ENCODE measurements at regions of chr19 and their contacts with region 1.

Region 1: DNA sequence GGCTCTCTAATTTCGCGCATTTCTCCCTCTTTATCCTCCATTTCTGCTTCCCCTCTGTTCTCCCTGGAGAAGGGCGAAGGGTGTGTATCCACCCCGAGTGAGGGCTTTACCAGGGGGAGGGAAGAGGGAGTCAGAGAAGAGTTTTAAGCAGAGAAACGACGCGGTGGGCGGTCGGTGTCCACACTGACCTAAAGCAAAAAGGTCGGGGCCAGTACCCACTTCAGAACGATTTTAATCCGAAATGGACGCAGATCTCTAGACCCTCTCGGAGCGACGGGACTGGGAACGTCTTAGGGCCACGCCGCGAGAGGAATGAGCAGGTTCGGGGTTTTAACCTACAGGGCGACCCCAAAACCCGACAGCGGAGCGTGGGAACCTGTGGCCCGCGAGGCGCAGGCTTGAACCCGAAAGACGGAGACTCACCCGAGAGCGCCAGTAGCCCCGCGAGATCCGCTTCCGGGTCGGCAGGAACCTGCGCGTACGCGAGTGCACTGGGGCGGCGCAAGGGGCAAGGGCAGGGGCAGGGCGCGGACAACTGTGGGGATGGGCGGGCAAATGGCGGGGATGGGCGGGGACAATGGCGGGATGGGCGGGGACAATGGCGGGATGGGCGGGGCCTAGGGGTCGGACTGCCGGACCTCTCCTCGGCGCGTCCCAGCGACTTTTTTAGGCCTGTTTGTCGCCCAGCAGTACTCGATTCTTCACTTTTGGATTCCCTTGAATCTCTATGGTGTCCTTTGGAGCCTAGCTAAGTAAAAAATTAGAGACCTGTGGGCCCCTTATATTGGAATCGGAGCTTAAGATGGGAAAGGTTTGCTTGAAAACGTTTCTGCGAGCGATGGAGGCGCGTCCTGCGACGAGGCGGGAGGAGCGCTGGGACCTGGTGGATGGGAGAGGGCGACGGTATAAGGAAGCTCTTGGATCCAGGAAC is at the start of gene ZNF677:
- DNase-seq: peak; percentile 90
- H3K4me3 Mint-ChIP-seq: peak within 1 kb of the TSS; percentile 78
- H3K27ac Mint-ChIP-seq: no peak within 1 kb of the TSS
- H3K4me1 Mint-ChIP-seq: peaks cover 10% of the 10 kb centered on the region
- H3K27me3 Mint-ChIP-seq: no peaks in the 10 kb centered on the region
- total RNA-seq, gene ZNF677: 4.6 to 4.9 TPM

Region 2: GRCh38 chr19:53068834-53069233 is 185.8 kb before region 1 on chr19:
- CTCF ChIA-PET with region 1: no interaction called
- POLR2A ChIA-PET with region 1: no interaction called
- intact Hi-C with region 1: loop called (anchors 10 kb)
- DNase-seq: no peak
- H3K4me3 Mint-ChIP-seq: no peak overlapping the region
- H3K27ac Mint-ChIP-seq: no peak overlapping the region
- H3K4me1 Mint-ChIP-seq: no peaks in the 10 kb centered on the region
- H3K27me3 Mint-ChIP-seq: no peaks in the 10 kb centered on the region

Region 3: DNA sequence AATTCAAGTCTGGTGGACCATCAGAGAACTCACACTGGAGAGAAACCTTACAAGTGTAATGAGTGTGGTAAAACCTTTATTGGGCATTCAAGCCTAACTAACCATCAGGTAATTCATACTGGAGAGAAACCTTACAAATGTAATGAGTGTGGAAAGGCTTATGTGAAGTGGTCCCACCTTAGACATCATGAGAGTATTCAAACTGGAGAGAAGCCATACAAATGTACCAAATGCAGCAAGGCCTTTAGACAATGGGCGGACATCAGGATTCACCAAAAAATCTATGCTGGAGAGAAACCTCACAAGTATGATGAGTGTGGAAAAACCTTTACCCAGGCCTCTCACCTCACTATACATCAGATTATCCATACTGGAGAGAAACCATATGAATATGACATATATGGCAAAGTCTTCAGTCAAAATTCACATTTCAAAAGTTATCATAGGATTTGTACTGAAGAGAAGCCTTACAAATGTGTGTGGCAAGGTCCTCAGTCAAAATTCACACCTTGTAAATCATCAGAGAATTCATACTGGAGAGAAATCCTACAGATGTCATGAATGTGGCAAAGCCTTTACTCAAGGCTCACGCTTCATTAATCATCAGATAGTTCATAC is 41.9 kb before region 1 on chr19:
- CTCF ChIA-PET with region 1: no interaction called
- POLR2A ChIA-PET with region 1: no interaction called
- intact Hi-C with region 1: no loop called
- DNase-seq: no peak
- H3K4me3 Mint-ChIP-seq: no peak overlapping the region
- H3K27ac Mint-ChIP-seq: no peak overlapping the region
- H3K4me1 Mint-ChIP-seq: no peaks in the 10 kb centered on the region
- H3K27me3 Mint-ChIP-seq: no peaks in the 10 kb centered on the region

Region 4: GRCh38 chr19:53394974-53395839 is 140.5 kb after region 1 on chr19 and contains the start of gene ZNF765:
- CTCF ChIA-PET with region 1: no interaction called
- POLR2A ChIA-PET with region 1: no interaction called
- intact Hi-C with region 1: loop called (anchors 10 kb)
- DNase-seq: peak; percentile 98
- H3K4me3 Mint-ChIP-seq: peak within 1 kb of the TSS; percentile 90
- H3K27ac Mint-ChIP-seq: peak within 1 kb of the TSS; percentile 80
- H3K4me1 Mint-ChIP-seq: peaks cover 19% of the 10 kb centered on the region
- H3K27me3 Mint-ChIP-seq: no peaks in the 10 kb centered on the region
- total RNA-seq, gene ZNF765: 8.2 to 8.7 TPM

Region 5: GRCh38 chr19:53594811-53595509 is 340.3 kb after region 1 on chr19:
- CTCF ChIA-PET with region 1: no interaction called
- POLR2A ChIA-PET with region 1: no interaction called
- intact Hi-C with region 1: no loop called
- DNase-seq: no peak
- H3K4me3 Mint-ChIP-seq: no peak overlapping the region
- H3K27ac Mint-ChIP-seq: no peak overlapping the region
- H3K4me1 Mint-ChIP-seq: no peaks in the 10 kb centered on the region
- H3K27me3 Mint-ChIP-seq: no peaks in the 10 kb centered on the region